ENCODE measurements at regions of chr4 and their contacts with region 1.

Region 1: DNA sequence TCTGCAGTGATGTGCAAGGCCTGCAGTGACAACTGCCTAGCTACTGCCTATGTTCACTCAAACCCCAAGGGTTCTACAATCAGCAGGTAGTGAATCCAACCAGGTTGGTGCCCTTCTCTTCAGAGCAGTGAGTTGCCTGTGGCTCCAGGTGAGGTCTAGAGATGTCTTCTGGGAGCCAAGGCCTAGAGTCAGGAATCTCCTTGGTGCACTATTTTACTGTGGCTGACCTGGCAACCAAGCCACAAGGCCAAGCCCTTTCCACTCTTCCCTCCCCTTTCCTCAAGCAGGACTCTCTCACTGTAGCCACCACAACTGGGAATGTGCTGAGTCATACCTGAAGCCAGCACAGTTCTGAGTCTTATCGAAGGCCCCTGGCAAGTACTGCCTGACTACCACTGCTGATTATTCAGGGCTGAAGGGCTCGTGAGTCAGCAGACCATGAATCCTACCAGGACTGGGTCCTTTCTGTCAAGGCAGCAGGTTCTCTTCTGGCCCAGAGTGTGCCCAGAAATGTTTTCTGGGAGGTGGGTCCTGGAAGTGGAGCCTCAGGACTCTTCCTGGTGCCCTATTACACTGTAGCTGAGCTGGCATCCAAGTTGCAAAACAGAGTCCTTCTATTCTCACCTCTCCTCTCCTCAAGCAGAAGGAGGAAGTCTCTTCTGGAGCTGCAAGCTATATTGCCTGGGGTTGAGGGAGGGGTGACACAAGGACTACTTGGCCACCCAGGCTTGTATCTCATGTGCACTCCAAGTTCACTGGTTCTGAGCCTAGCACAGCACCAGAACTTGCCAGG is 111.6 kb downstream of the BTC start:
- DNase-seq: no peak
- ATAC-seq: no peak

Region 2: GRCh38 chr4:74364652-74365491 is 317.9 kb before region 1 on chr4 and contains the start of gene EREG:
- intact Hi-C with region 1: loop called (anchors 5 kb)
- DNase-seq: no peak
- ATAC-seq: peak; percentile 60
- total RNA-seq, gene EREG: 0.22 TPM

Region 3: GRCh38 chr4:74692972-74693371 is 10.2 kb after region 1 on chr4:
- intact Hi-C with region 1: no loop called
- DNase-seq: no peak
- ATAC-seq: no peak

Measured in sciatic nerve (tissue), 2 donors.